PC-3 (cell line): ENCODE measurements at regions of chr10 and their contacts with region 1.

Region 1: GRCh38 chr10:122980209-122981065 is at the start of gene PSTK:
- DNase-seq: peak; percentile 83
- ATAC-seq: peak; percentile 97
- H3K4me3 ChIP-seq: peak within 1 kb of the TSS; percentile 82
- H3K27ac ChIP-seq: peak within 1 kb of the TSS; percentile 79
- H3K4me1 ChIP-seq: peaks cover 9% of the 10 kb centered on the region; the same call in 1 of the 2 replicates
- H3K27me3 ChIP-seq: no peaks in the 10 kb centered on the region
- CTCF ChIP-seq: peak; percentile 65
- total RNA-seq, gene PSTK: 2.3 and 2.6 TPM in 2 replicates

Region 2: DNA sequence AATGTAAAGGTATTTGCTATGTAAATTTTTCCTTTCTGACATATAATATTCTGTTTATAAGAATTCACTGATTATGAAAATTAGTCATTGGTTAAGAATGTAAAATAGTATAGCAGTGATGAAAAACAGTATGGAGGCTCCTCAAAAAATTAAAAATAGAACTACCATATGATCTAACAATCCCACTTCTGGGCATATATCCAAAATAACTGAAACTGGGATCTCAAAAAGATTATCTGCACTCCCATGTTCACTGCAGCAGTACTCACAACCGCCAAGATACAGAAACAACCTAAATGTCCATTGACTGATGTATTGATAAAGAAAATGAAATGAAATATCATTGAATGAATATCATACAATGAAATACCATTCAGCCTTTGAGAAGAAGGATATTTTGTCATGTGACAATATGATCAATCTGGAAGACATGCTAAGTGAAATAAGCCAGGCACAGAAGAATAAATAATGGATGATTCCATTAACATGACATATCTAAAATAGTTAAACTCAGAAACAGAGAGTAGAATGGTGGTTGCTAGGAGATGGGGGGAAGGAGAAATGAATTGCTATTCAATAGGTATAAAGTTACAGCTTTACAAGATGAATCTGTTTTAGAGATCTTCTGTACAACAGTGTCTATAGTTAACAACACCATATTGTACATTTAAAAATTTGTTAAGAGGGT is 40.4 kb before region 1 on chr10:
- CTCF ChIA-PET with region 1: no interaction called
- POLR2A ChIA-PET with region 1: no interaction called
- intact Hi-C with region 1: no loop called
- DNase-seq: no peak
- ATAC-seq: no peak
- H3K4me3 ChIP-seq: no peak overlapping the region
- H3K27ac ChIP-seq: no peak overlapping the region
- H3K4me1 ChIP-seq: no peaks in the 10 kb centered on the region
- H3K27me3 ChIP-seq: no peaks in the 10 kb centered on the region
- CTCF ChIP-seq: no peak

Region 3: GRCh38 chr10:122953827-122954730 is 26.4 kb before region 1 on chr10 and contains the start of gene C10orf88:
- CTCF ChIA-PET with region 1: no interaction called
- POLR2A ChIA-PET with region 1: no interaction called
- intact Hi-C with region 1: loop called (anchors 2 kb)
- DNase-seq: peak; percentile 95
- ATAC-seq: peak; percentile 99
- H3K4me3 ChIP-seq: peak within 1 kb of the TSS; percentile 91
- H3K27ac ChIP-seq: no peak within 1 kb of the TSS
- H3K4me1 ChIP-seq: peaks cover 14% of the 10 kb centered on the region; the same call in 1 of the 2 replicates
- H3K27me3 ChIP-seq: no peaks in the 10 kb centered on the region
- CTCF ChIP-seq: no peak
- total RNA-seq, gene C10orf88: 4.5 and 6.2 TPM in 2 replicates

Region 4: DNA sequence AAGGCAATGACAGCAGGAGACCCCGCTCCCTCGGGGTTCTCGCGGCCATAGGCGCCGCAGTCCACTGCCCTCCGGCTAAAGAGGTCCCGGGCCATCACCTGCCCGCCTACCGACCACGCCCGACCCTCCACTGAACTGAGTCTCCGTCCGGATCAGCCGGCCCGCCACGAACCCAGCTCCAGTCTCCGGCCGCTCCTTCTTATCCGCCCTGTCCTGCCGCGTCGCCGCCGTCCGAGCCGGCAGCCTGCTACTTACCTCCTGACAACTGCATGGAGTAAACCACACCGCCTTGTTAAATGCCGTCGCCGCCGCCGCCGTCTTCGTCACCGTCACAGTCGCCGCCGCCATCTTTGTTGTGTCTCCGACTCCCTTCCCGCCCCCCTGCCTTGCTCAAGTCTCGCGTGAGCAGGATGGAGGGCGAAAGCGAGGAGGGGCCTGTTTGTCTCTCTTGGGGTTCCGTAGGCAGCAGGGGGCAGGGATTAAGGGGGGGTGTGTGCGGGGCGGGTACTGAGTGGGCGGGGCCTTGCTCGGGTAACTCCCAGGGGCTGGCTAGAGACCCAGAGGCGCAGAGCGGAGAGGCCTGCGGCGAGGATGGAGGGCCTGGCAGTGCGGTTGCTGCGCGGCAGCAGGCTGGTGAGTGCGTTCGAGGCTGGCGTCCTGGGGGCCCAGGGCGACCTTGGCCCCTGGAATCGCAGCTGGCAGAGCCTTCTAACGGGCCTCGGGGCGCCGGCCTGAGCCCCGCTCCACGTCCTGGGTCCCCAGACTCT is 28.2 kb after region 1 on chr10 and contains the starts of genes ACADSB and IKZF5:
- CTCF ChIA-PET with region 1: no interaction called
- POLR2A ChIA-PET with region 1: no interaction called
- intact Hi-C with region 1: loop called (anchors 2 kb)
- DNase-seq: peak; percentile 89
- ATAC-seq: peak; percentile 85
- H3K4me3 ChIP-seq: peak within 1 kb of the TSS; percentile 99
- H3K27ac ChIP-seq: peak within 1 kb of the TSS; percentile 51
- H3K4me1 ChIP-seq: peaks cover 12% of the 10 kb centered on the region
- H3K27me3 ChIP-seq: no peaks in the 10 kb centered on the region
- CTCF ChIP-seq: no peak
- total RNA-seq, gene ACADSB: 2.8 and 3.2 TPM in 2 replicates
- total RNA-seq, gene IKZF5: 1.6 TPM in 2 replicates